GM12878 (cell line): ENCODE measurements at regions of chr12 and their contacts with region 1.

Region 1: GRCh38 chr12:82593901-82594396 is 92.8 kb upstream of the TMTC2 start:
- DNase-seq: peak; percentile 49
- ATAC-seq: peak; percentile 91
- H3K4me3 ChIP-seq: no peak overlapping the region; the same call in 1 of the 2 replicates
- H3K27ac ChIP-seq: peak overlapping the region; percentile 39
- H3K4me1 ChIP-seq: peaks cover 4% of the 10 kb centered on the region; the same call in 1 of the 2 replicates
- H3K27me3 ChIP-seq: no peaks in the 10 kb centered on the region
- CTCF ChIP-seq: no peak
- EP300 ChIP-seq: peak; percentile 74 to 82; a peak in 3 of 4 replicates
- POLR2A ChIP-seq: no peak
- RAD21 ChIP-seq: no peak

Region 2: GRCh38 chr12:81953541-81953940 is 640.4 kb before region 1 on chr12:
- CTCF ChIA-PET with region 1: no interaction called
- POLR2A ChIA-PET with region 1: no interaction called
- RAD21 ChIA-PET with region 1: no interaction called
- SMC1A ChIA-PET with region 1: no interaction called
- in situ Hi-C with region 1: no loop called
- intact Hi-C with region 1: loop called (anchors 10 kb)
- DNase-seq: no peak
- ATAC-seq: peak; percentile 48
- H3K4me3 ChIP-seq: no peak overlapping the region
- H3K27ac ChIP-seq: no peak overlapping the region
- H3K4me1 ChIP-seq: no peaks in the 10 kb centered on the region
- H3K27me3 ChIP-seq: no peaks in the 10 kb centered on the region
- CTCF ChIP-seq: no peak
- EP300 ChIP-seq: no peak
- POLR2A ChIP-seq: no peak
- RAD21 ChIP-seq: no peak

Region 3: DNA sequence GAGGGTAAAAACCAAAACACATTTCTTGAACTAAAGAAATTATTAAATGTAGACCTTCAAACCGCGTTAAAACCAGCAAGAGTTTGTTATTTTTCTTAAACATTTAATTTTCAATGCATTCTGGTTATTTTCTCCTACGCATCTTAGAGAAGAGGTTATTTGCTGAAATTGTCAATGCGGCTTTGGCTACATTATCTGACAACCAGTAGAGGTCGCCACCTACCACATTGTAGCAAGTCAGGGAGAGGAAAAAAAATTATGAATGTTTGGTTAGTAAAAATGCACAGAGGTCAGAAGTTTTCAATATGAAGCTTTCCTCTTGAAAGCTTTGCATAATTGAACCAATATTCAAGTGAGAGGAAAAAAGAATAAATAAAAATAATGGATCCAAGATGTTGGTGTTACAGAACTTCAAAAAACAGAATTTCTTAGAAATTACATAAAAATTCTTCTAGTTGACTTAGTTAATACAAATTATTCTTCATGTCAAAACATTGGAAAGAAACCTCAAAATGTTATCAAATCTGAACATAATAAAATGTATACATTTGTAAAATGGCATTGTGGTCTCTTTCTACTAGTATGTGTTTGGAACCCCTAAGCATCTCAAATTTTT is 66.7 kb before region 1 on chr12:
- CTCF ChIA-PET with region 1: interaction called, 16 read pairs
- POLR2A ChIA-PET with region 1: no interaction called
- RAD21 ChIA-PET with region 1: interaction called, 14 read pairs
- SMC1A ChIA-PET with region 1: interaction called, 41 read pairs
- in situ Hi-C with region 1: no loop called
- intact Hi-C with region 1: no loop called
- DNase-seq: no peak
- ATAC-seq: peak; percentile 80
- H3K4me3 ChIP-seq: no peak overlapping the region
- H3K27ac ChIP-seq: no peak overlapping the region
- H3K4me1 ChIP-seq: no peaks in the 10 kb centered on the region
- H3K27me3 ChIP-seq: no peaks in the 10 kb centered on the region
- CTCF ChIP-seq: peak; percentile 83 to 92 (median 84)
- EP300 ChIP-seq: no peak
- POLR2A ChIP-seq: no peak
- RAD21 ChIP-seq: peak; percentile 97

Region 4: GRCh38 chr12:82554529-82554928 is 39.4 kb before region 1 on chr12:
- CTCF ChIA-PET with region 1: interaction called, 3 read pairs
- POLR2A ChIA-PET with region 1: interaction called, 3 read pairs
- RAD21 ChIA-PET with region 1: interaction called, 4 read pairs
- SMC1A ChIA-PET with region 1: interaction called, 14 read pairs
- in situ Hi-C with region 1: no loop called
- intact Hi-C with region 1: no loop called
- DNase-seq: peak; percentile 36
- ATAC-seq: peak; percentile 95
- H3K4me3 ChIP-seq: no peak overlapping the region
- H3K27ac ChIP-seq: no peak overlapping the region
- H3K4me1 ChIP-seq: no peaks in the 10 kb centered on the region
- H3K27me3 ChIP-seq: no peaks in the 10 kb centered on the region
- CTCF ChIP-seq: no peak
- EP300 ChIP-seq: peak in 1 of 2 experiments; percentile 11; a peak in 1 of 4 replicates
- POLR2A ChIP-seq: no peak
- RAD21 ChIP-seq: no peak

Region 5: GRCh38 chr12:82583756-82584155 is 10.2 kb before region 1 on chr12:
- CTCF ChIA-PET with region 1: interaction called, 6 read pairs
- POLR2A ChIA-PET with region 1: no interaction called
- RAD21 ChIA-PET with region 1: no interaction called
- SMC1A ChIA-PET with region 1: interaction called, 18 read pairs
- in situ Hi-C with region 1: no loop called
- intact Hi-C with region 1: no loop called
- DNase-seq: no peak
- ATAC-seq: no peak; the same call in 2 of the 3 replicates
- H3K4me3 ChIP-seq: no peak overlapping the region
- H3K27ac ChIP-seq: no peak overlapping the region
- H3K4me1 ChIP-seq: no peaks in the 10 kb centered on the region
- H3K27me3 ChIP-seq: no peaks in the 10 kb centered on the region
- CTCF ChIP-seq: no peak
- EP300 ChIP-seq: no peak
- POLR2A ChIP-seq: no peak
- RAD21 ChIP-seq: no peak

Region 6: DNA sequence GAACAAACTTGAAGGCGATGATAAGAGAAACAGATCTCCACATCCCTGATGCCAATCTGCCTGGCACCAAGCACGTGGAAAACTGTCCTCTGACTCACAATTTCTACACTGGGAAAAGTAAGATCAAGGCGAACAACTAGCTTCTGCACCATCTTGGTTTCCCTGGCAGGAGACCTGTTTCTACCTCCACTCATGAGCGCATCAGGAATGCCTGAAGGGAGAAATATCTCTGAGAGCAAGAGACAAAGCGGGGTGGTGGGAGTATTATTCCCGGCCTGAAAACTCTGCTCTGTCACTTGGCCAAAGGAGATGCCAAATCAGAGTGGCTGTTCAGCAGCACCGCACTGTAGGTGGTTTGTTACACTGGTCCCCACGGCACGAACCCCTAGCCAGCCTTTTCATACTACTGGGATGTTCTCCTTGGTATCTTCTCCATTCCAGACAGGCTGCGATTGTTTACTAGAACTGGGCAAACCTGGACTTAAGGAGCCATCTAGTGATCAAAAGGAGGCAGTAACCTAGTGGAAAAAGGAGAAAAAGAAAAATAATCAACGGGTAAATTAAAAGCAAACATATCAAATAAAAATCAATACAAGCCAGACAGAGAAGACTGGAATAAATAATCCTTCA is 33.7 kb after region 1 on chr12:
- CTCF ChIA-PET with region 1: interaction called, 5 read pairs
- POLR2A ChIA-PET with region 1: no interaction called
- RAD21 ChIA-PET with region 1: interaction called, 6 read pairs
- SMC1A ChIA-PET with region 1: interaction called, 21 read pairs
- in situ Hi-C with region 1: no loop called
- intact Hi-C with region 1: no loop called
- DNase-seq: no peak
- ATAC-seq: peak; percentile 81
- H3K4me3 ChIP-seq: no peak overlapping the region
- H3K27ac ChIP-seq: no peak overlapping the region
- H3K4me1 ChIP-seq: no peaks in the 10 kb centered on the region
- H3K27me3 ChIP-seq: no peaks in the 10 kb centered on the region
- CTCF ChIP-seq: peak; percentile 40 to 65 (median 43); a peak in 4 of 6 replicates
- EP300 ChIP-seq: no peak
- POLR2A ChIP-seq: no peak
- RAD21 ChIP-seq: peak; percentile 81